ENCODE measurements at regions of chr22 and their contacts with region 1.

Region 1: DNA sequence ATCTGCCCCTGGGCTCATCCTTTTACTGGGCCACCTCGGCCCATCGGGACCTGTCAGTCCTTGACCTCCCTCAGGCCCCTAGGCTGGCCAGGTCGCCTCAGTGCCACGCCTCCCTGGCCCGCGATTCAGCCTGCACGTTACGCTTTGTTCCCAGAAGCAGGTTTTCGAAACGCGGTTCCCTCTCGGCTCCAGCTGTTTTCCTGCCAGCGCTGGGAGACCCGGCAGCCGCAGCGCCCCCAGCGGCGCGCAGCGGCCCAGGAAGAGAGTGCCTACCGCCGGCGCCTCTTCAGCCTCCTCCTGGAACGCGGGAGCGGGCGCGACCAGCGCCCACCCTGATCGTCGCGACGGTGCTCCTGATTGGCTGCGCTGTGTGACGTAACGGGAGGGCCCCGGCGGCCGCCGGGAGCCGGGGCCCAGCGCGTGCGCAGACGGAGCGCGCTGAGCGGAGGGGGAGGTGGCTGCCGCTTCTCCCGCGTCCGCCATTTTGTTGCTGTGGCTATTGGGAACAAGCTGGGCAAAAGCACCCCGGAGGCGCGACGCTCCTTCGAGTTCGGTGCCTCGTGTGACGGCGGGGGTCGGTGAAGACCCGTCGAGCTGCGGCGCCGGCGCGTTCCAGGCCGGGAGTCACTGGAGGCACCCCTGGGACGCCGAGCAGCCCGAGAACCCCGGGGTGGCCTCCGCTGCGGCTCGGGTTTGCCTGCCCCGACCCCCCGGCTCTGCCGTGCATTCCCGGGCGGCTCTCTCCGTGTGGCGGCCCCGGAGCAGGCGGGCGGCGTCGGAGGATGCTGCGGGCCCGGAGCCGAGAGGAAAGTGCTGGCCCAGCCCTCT is at the start of gene CRKL:
- DNase-seq: peak; percentile 90 to 98 (median 96)
- H3K4me3 ChIP-seq: peak within 1 kb of the TSS; percentile 64 to 100 (median 97)
- H3K27ac ChIP-seq: peak within 1 kb of the TSS; percentile 26 to 99 (median 96)
- H3K27me3 ChIP-seq: no peaks in the 10 kb centered on the region
- CTCF ChIP-seq: peak; percentile 75 to 99 (median 93)
- total RNA-seq, gene CRKL: 75.1 to 125 (median 94.5) TPM

Region 2: GRCh38 chr22:20858615-20859416 is 58.4 kb before region 1 on chr22 and contains the starts of genes PI4KA and SNAP29:
- intact Hi-C with region 1: loop called (anchors 2 to 5 kb)
- DNase-seq: peak; percentile 97 to 99 (median 98)
- H3K4me3 ChIP-seq: peak within 1 kb of the TSS; percentile 75 to 99 (median 94)
- H3K27ac ChIP-seq: peak within 1 kb of the TSS; percentile 59 to 98 (median 89)
- H3K27me3 ChIP-seq: no peaks in the 10 kb centered on the region
- CTCF ChIP-seq: peak in 22 of 56 donors; percentile 10 to 64 (median 22)
- total RNA-seq, gene PI4KA: 211 to 601 (median 463) TPM
- total RNA-seq, gene SNAP29: 16.5 to 33.5 (median 23.5) TPM

Region 3: DNA sequence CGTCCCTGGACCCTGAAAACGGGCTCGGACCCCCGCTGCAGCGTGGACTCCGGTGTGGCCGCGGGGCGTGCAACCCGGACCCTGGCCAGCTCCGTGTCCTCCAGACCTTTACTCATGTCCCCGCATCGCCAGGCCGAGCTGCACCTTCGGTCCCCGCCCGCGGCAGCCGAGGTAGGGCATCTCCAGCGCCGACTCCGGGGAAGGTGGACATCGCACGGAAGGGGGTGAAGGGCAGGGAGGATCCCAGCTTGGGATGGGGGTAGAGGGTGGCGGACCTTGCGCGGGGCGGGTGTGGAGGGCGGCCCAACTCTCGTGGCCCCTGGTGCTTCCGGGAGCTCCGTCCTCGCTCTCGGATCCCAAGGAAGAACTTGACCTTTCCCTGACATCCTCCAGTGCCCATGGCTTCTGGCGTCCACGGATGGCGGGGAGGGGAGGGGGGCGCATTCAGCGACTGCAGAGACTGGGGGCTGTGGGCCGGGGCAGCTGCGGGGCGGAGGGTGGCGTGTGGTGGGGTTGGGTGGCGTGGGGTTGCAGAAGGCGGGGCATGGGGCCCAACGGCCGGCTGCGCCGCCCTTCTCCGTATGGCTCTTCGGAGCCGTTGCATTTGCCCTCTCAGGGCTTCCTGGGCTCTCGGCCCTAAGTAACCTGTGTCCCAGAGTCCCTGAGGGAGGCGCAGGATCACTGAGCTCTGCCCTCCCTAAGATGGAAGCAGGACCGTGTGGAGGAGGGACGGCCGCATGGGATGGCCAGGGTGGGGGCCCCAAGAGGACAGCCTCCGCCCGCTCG is 40.3 kb after region 1 on chr22:
- intact Hi-C with region 1: loop called in 1 of 2 experiments (anchors 5 kb)
- DNase-seq: peak in 1 of 10 donors; percentile 42
- H3K4me3 ChIP-seq: peak overlapping the region; percentile 41 to 82 (median 71)
- H3K27ac ChIP-seq: peak overlapping the region in 53 of 59 donors; percentile 3 to 87 (median 57)
- H3K27me3 ChIP-seq: no peaks in the 10 kb centered on the region
- CTCF ChIP-seq: no peak

Region 4: GRCh38 chr22:20981787-20982562 is 64.8 kb after region 1 on chr22 and contains the start of gene LZTR1:
- intact Hi-C with region 1: loop called (anchors 1 to 5 kb)
- DNase-seq: peak; percentile 75 to 93 (median 85)
- H3K4me3 ChIP-seq: peak within 1 kb of the TSS; percentile 69 to 99 (median 90)
- H3K27ac ChIP-seq: peak within 1 kb of the TSS; percentile 76 to 99 (median 96)
- H3K27me3 ChIP-seq: no peaks in the 10 kb centered on the region
- CTCF ChIP-seq: peak; percentile 31 to 84 (median 63)
- total RNA-seq, gene LZTR1: 48.3 to 115 (median 73.6) TPM

Measured in dorsolateral prefrontal cortex (tissue), 120 donors.